Mammary epithelial cell (primary cell): ENCODE measurements at regions of chrX and their contacts with region 1.

Region 1: GRCh38 chrX:80808160-80808735 is 1.4 kb downstream of the BRWD3 start:
- DNase-seq: peak; percentile 71
- H3K4me3 ChIP-seq: peak overlapping the region; percentile 65 to 75 (median 71)
- H3K27ac ChIP-seq: peak overlapping the region; percentile 73
- H3K4me1 ChIP-seq: no peaks in the 10 kb centered on the region
- H3K27me3 ChIP-seq: no peaks in the 10 kb centered on the region
- CTCF ChIP-seq: no peak

Region 2: GRCh38 chrX:80206647-80207046 is 601.6 kb before region 1 on chrX:
- CTCF ChIA-PET with region 1: no interaction called
- dilution Hi-C with region 1: no loop called
- in situ Hi-C with region 1: no loop called
- intact Hi-C with region 1: no loop called
- DNase-seq: no peak
- H3K4me3 ChIP-seq: no peak overlapping the region
- H3K27ac ChIP-seq: no peak overlapping the region
- H3K4me1 ChIP-seq: no peaks in the 10 kb centered on the region
- H3K27me3 ChIP-seq: peaks cover 3% of the 10 kb centered on the region
- CTCF ChIP-seq: no peak

Region 3: DNA sequence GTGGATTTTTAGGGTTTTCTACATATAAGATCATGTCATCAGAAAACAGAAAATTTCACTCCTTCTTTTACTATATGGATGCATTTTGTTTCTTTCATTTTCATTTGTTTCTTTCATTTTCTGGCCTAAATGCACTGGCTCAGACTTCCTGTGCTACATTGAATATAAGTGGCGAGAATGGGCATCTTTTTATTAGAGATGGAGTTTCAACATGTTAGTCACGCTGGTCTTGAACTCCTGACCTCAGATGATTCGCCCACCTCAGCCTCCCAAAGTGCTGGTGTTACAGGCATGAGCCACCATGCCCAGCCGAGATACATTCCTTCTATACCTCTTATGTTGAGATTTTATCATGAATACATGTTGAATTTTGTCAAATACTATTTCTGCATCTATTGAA is 60.4 kb before region 1 on chrX:
- CTCF ChIA-PET with region 1: no interaction called
- dilution Hi-C with region 1: no loop called
- in situ Hi-C with region 1: no loop called
- intact Hi-C with region 1: loop called (anchors 10 kb)
- DNase-seq: peak; percentile 46
- H3K4me3 ChIP-seq: no peak overlapping the region
- H3K27ac ChIP-seq: no peak overlapping the region
- H3K4me1 ChIP-seq: no peaks in the 10 kb centered on the region
- H3K27me3 ChIP-seq: no peaks in the 10 kb centered on the region
- CTCF ChIP-seq: no peak

Region 4: GRCh38 chrX:80765186-80765585 is 43.1 kb before region 1 on chrX:
- CTCF ChIA-PET with region 1: no interaction called
- dilution Hi-C with region 1: no loop called
- in situ Hi-C with region 1: no loop called
- intact Hi-C with region 1: loop called (anchors 1 kb)
- DNase-seq: peak; percentile 73
- H3K4me3 ChIP-seq: no peak overlapping the region
- H3K27ac ChIP-seq: peak overlapping the region; percentile 11
- H3K4me1 ChIP-seq: no peaks in the 10 kb centered on the region
- H3K27me3 ChIP-seq: no peaks in the 10 kb centered on the region
- CTCF ChIP-seq: no peak

Region 5: GRCh38 chrX:80792205-80792604 is 16.0 kb before region 1 on chrX:
- CTCF ChIA-PET with region 1: no interaction called
- dilution Hi-C with region 1: no loop called
- in situ Hi-C with region 1: no loop called
- intact Hi-C with region 1: no loop called
- DNase-seq: no peak
- H3K4me3 ChIP-seq: no peak overlapping the region
- H3K27ac ChIP-seq: no peak overlapping the region
- H3K4me1 ChIP-seq: no peaks in the 10 kb centered on the region
- H3K27me3 ChIP-seq: no peaks in the 10 kb centered on the region
- CTCF ChIP-seq: no peak

Region 6: DNA sequence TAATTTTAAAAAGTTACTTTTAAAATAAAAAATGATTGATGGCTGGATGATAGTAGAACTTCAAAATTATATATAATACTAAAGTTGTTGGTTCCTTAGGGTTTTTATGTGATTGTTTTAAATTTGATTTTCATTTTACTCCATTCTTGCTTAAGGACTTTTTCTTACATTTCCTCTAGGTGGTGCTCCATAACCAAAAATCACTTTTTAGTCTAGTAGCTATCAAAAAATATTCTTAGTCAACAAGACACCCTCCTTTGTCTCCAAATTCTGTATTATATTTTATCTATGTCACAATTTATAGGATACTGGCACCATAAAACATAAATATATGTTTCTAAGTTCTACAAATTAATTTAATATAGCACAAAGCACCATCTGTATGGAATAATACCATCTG is 68.6 kb after region 1 on chrX:
- CTCF ChIA-PET with region 1: no interaction called
- dilution Hi-C with region 1: no loop called
- in situ Hi-C with region 1: no loop called
- intact Hi-C with region 1: no loop called
- DNase-seq: peak; percentile 11
- H3K4me3 ChIP-seq: no peak overlapping the region
- H3K27ac ChIP-seq: no peak overlapping the region
- H3K4me1 ChIP-seq: no peaks in the 10 kb centered on the region
- H3K27me3 ChIP-seq: no peaks in the 10 kb centered on the region
- CTCF ChIP-seq: peak; percentile 47 to 49

Region 7: DNA sequence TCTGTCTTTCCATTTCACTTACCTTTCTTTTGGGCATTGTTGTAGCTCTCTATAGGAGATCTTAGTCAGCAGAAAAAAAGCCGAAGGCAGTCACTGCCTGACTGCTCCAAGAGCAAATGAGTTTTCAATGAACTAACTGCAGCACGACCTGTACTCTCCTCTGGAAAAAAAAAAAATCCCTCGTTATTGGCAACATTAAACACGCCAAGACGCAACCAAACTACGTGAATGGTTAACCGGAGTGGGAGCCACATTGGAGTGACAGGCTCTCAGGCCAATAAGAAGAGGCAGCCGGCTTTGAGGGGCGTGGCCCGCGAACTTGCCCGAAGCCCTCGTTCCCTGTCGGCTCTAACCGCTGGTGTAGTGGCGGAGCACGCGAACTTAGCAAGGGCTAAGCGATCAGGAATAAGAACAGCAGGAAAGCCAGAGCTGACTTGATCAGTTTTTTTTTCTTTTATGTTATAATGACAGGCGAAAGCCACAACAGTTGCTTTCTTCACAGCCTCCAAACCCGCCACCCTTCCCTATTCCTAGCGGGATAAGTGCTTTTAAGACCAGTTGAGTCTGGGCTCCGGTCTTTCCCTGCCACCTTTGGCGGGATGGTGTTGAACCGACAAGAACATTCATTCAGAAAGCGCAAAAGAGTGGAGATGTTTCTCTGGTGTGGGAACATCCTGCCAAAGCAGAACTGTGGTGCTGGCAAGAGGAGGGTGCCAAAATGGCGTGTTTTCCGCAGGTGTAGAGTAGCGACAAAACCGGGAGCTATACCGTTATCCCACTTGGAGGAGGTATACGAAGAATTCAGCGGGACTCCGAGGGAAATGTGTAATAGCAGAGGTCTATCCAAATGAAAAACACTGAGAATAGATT is 313.5 kb after region 1 on chrX:
- CTCF ChIA-PET with region 1: no interaction called
- dilution Hi-C with region 1: no loop called
- in situ Hi-C with region 1: no loop called
- intact Hi-C with region 1: loop called (anchors 10 kb)
- DNase-seq: peak; percentile 89
- H3K4me3 ChIP-seq: peak overlapping the region; percentile 61 to 87 (median 66)
- H3K27ac ChIP-seq: no peak overlapping the region
- H3K4me1 ChIP-seq: no peaks in the 10 kb centered on the region
- H3K27me3 ChIP-seq: no peaks in the 10 kb centered on the region
- CTCF ChIP-seq: no peak

Region 8: GRCh38 chrX:81215685-81216084 is 407.4 kb after region 1 on chrX:
- CTCF ChIA-PET with region 1: no interaction called
- dilution Hi-C with region 1: no loop called
- in situ Hi-C with region 1: no loop called
- intact Hi-C with region 1: no loop called
- DNase-seq: no peak
- H3K4me3 ChIP-seq: no peak overlapping the region
- H3K27ac ChIP-seq: no peak overlapping the region
- H3K4me1 ChIP-seq: no peaks in the 10 kb centered on the region
- H3K27me3 ChIP-seq: no peaks in the 10 kb centered on the region
- CTCF ChIP-seq: no peak